B cell (primary cell): ENCODE measurements at regions of chr12 and their contacts with region 1.

Region 1: DNA sequence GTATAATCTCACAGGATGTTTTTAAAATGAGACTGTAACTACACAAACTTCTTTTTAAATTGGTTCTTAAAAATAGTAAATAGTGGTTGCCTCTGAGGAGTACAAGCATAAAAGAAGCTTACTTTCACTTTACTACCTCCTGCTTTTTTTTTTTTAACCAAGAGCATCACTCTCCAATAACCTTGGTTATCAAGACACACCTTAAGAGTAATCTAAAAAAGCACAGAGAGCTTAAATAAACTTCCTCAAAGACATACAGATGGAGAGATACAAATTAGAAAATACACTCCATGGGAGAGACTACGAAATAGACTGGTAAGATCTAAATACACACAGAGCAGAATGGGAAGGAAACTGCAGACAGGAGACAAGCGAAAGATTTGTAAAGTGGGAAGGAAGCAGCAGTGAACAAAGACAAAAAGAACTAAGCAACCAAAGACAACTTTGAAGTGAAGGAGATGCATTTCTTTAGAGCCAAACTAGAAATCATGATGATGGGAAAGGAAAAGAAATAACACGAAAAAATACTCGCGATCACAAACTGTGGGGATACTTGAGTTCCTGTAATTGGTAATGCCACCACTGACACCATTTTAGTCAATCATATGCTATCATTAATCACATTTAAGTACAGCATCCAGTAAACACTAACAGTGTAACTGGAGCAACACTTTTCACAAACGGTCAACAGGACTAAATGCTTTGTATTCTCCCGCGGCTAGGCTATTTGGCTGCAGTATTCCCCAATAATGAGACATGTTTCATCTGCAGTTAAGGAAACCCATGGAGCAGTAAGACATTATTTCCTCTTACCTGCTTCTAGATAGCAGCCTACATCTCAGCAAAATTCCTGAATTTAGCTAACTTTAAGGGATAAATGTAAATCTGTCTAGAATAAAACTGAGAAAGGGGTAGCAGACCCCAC is 8.2 kb downstream of the SINHCAF start:
- DNase-seq: peak; percentile 47
- ATAC-seq: peak; percentile 50
- H3K4me3 ChIP-seq: peak overlapping the region; percentile 21 to 79 (median 43)
- H3K4me3 Mint-ChIP-seq: peak overlapping the region; percentile 87
- H3K27ac ChIP-seq: peak overlapping the region; percentile 62 to 87
- H3K27ac Mint-ChIP-seq: peak overlapping the region; percentile 83
- H3K4me1 ChIP-seq: peaks cover 50 to 64% of the 10 kb centered on the region in 2 donors
- H3K4me1 Mint-ChIP-seq: peaks cover 77% of the 10 kb centered on the region
- H3K27me3 ChIP-seq: no peaks in the 10 kb centered on the region
- H3K27me3 Mint-ChIP-seq: no peaks in the 10 kb centered on the region
- CTCF ChIP-seq: no peak

Region 2: DNA sequence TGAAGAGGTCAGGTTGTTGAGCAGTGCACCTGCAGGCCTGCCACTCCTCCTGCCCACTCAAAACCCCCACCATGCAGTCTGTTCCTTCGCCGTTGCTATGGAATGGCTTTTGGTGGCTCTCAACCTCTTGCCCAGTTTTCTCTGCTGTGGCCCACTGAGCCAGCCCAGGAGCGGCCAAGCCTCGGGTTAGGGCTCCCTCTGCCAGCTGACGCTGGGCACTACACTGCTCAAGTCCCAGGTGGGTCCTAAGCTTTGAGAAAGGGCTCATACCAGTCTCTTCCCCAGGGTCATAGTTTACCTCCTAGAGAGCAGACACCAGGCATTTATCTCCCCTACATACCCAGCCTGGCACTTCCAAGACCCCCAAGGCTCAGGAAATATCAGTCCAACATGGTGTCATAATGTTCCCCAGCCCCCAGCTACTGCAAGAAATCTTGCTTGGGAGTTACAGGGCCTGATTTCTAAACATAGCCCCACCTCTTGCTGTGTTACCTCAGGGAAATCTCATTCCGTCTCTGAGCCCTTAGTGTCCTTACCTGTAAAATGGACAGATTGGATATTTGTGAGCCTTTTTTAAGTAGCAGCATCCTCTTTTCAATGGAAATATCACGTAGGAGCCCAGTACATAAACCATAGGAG is 331.8 kb before region 1 on chr12:
- CTCF ChIA-PET with region 1: no interaction called
- POLR2A ChIA-PET with region 1: no interaction called
- intact Hi-C with region 1: no loop called
- DNase-seq: peak; percentile 20
- ATAC-seq: no peak
- H3K4me3 ChIP-seq: no peak overlapping the region
- H3K4me3 Mint-ChIP-seq: no peak overlapping the region
- H3K27ac ChIP-seq: no peak overlapping the region
- H3K27ac Mint-ChIP-seq: no peak overlapping the region
- H3K4me1 ChIP-seq: no peaks in the 10 kb centered on the region
- H3K4me1 Mint-ChIP-seq: no peaks in the 10 kb centered on the region
- H3K27me3 ChIP-seq: no peaks in the 10 kb centered on the region
- H3K27me3 Mint-ChIP-seq: no peaks in the 10 kb centered on the region
- CTCF ChIP-seq: peak; percentile 24

Region 3: DNA sequence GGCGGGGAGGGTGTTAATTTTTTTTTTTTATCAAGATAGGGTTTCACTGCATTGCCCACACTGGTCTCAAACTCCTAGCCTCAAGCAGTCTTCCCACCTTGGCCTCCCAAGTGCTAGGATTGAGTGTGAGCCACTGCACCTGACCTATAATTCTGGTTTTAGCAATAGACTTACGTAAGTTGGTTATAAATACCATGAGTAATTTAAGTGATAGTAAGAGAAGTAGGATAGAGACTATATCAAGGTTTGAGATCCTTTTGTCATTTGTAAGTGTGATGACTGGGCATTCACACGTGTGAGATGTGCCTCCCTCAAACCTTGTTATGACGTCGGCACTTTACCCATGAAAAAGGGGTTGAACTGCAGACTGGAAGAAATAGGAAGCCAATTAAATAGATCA is 14.3 kb before region 1 on chr12:
- CTCF ChIA-PET with region 1: interaction called, 3 read pairs
- POLR2A ChIA-PET with region 1: no interaction called
- intact Hi-C with region 1: loop called (anchors 2 kb)
- DNase-seq: no peak
- ATAC-seq: no peak
- H3K4me3 ChIP-seq: no peak overlapping the region
- H3K4me3 Mint-ChIP-seq: no peak overlapping the region
- H3K27ac ChIP-seq: no peak overlapping the region
- H3K27ac Mint-ChIP-seq: no peak overlapping the region
- H3K4me1 ChIP-seq: peaks cover 19 to 22% of the 10 kb centered on the region in 2 donors
- H3K4me1 Mint-ChIP-seq: peaks cover 67% of the 10 kb centered on the region
- H3K27me3 ChIP-seq: no peaks in the 10 kb centered on the region
- H3K27me3 Mint-ChIP-seq: no peaks in the 10 kb centered on the region
- CTCF ChIP-seq: no peak

Region 4: GRCh38 chr12:31331242-31331641 is 13.5 kb after region 1 on chr12:
- CTCF ChIA-PET with region 1: no interaction called
- POLR2A ChIA-PET with region 1: no interaction called
- intact Hi-C with region 1: no loop called
- DNase-seq: peak; percentile 41
- ATAC-seq: peak; percentile 53
- H3K4me3 ChIP-seq: no peak overlapping the region
- H3K4me3 Mint-ChIP-seq: peak overlapping the region; percentile 44
- H3K27ac ChIP-seq: peak overlapping the region in 1 of 2 donors; percentile 24
- H3K27ac Mint-ChIP-seq: peak overlapping the region; percentile 68
- H3K4me1 ChIP-seq: peaks cover 9 to 20% of the 10 kb centered on the region in 2 donors
- H3K4me1 Mint-ChIP-seq: peaks cover 23% of the 10 kb centered on the region
- H3K27me3 ChIP-seq: no peaks in the 10 kb centered on the region
- H3K27me3 Mint-ChIP-seq: no peaks in the 10 kb centered on the region
- CTCF ChIP-seq: no peak

Region 5: DNA sequence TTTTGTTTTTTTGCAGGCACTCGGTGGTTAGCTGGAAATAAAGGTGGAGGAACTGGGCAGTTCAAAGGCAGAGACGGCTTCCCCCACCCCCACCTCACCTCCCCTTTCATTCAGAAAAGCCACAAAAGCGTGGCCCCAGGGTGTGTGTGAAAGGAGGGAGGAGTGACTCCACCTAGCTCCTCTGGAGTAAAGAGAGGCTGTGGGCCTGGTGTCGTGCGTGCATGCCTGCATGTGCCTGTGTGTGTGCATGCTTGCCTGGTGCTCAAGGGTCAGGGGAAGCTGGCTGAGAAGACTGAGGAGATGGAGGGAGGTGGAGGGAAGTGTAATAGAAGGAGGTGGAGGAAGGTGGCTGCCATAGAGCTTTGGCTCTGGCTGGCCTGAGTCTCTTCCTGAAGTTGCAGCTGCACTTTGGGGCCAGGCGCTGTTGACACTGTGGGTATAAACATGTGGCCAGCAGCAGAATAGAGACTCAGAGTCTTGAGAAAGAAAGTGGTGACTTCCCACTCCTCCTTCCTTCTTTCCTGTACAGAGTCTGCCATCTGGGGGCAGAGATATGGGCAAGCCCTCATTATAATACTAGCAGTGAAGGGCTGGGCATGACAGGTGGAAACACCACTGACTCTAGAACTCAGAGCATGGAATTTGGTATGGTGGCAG is 45.2 kb after region 1 on chr12:
- CTCF ChIA-PET with region 1: interaction called, 4 read pairs
- POLR2A ChIA-PET with region 1: no interaction called
- intact Hi-C with region 1: loop called (anchors 5 kb)
- DNase-seq: peak; percentile 60
- ATAC-seq: peak; percentile 80
- H3K4me3 ChIP-seq: peak overlapping the region in 2 of 5 experiments; percentile 19 to 25
- H3K4me3 Mint-ChIP-seq: peak overlapping the region; percentile 59
- H3K27ac ChIP-seq: peak overlapping the region in 1 of 2 donors; percentile 7
- H3K27ac Mint-ChIP-seq: peak overlapping the region; percentile 46
- H3K4me1 ChIP-seq: peaks cover 16 to 21% of the 10 kb centered on the region in 2 donors
- H3K4me1 Mint-ChIP-seq: peaks cover 22% of the 10 kb centered on the region
- H3K27me3 ChIP-seq: no peaks in the 10 kb centered on the region
- H3K27me3 Mint-ChIP-seq: no peaks in the 10 kb centered on the region
- CTCF ChIP-seq: no peak

Region 6: DNA sequence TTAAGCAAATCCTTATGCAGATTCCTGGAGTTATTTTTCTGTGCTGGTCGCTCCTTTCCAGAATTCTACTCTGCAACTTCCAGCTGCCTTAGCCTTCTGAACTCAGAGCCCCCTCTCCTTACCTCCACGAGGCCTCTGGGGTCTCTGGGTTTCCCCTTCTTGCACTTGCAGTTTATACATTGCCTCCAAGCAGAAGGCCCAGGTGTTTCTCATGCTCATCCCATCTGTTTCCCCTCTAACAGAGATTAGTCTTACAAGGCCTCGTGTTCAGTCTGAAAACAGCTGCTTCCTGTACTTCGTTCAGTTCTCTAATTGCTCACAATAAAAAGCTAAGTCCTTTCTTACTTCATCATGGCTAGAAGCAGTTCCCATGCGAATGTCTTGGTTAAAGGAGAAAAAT is 947.2 kb after region 1 on chr12:
- CTCF ChIA-PET with region 1: no interaction called
- POLR2A ChIA-PET with region 1: no interaction called
- intact Hi-C with region 1: loop called (anchors 5 kb)
- DNase-seq: peak; percentile 84
- ATAC-seq: peak; percentile 77
- H3K4me3 ChIP-seq: peak overlapping the region in 1 of 5 experiments; percentile 11
- H3K4me3 Mint-ChIP-seq: peak overlapping the region; percentile 33
- H3K27ac ChIP-seq: peak overlapping the region; percentile 95 to 98
- H3K27ac Mint-ChIP-seq: peak overlapping the region; percentile 82
- H3K4me1 ChIP-seq: peaks cover 39 to 40% of the 10 kb centered on the region in 2 donors
- H3K4me1 Mint-ChIP-seq: peaks cover 37% of the 10 kb centered on the region
- H3K27me3 ChIP-seq: no peaks in the 10 kb centered on the region
- H3K27me3 Mint-ChIP-seq: no peaks in the 10 kb centered on the region
- CTCF ChIP-seq: no peak